Activated T-helper 1 cell treated with anti-CD3 and anti-CD28 coated beads, Interleukin-12 subunit alpha, Interleukin-12 subunit beta, Interleukin-2, Interleukin-4 antibody, amounts not matched to agents 30 ng/mL and 10 ng/mL and 1 ng/mL, durations not matched to agents 14 hours and 24 hours and 36 hours (primary cell): ENCODE measurements at regions of chr20 and their contacts with region 1.

Region 1: DNA sequence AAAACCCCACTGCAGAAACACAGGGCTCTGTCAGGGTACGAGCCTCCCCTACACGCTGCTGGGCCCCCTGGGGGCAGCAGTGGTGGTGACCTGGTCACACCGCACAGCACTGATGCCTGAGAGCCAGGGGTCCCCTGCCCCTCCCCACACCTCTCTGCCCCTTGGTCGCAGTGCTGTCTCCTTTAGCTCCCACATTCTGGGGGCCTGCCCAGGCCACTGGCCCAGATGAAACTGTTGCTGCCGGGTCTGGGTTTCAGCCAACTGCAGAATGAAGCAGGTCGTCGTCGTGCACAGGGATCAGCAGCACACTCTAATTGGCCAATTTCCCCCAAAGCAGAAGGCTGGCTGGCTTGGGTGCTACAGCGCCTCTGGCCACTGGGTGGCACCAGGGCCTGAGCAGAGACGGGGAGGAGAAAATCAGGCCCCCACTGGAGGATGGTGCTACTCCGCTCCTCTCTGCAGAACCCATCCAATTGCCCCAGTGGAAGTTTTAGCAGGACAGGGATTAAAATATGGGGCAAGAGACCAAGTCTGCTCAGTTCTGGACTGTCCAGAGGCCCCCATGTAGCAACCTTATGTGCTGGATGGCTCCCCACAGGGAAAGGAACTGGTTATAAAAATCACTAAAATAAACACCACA is 26.1 kb downstream of the DIDO1 start:
- DNase-seq: peak; percentile 60
- H3K4me3 Mint-ChIP-seq: peak overlapping the region; percentile 30
- H3K27ac Mint-ChIP-seq: peak overlapping the region; percentile 70
- H3K4me1 Mint-ChIP-seq: peaks cover 37% of the 10 kb centered on the region
- H3K27me3 Mint-ChIP-seq: no peaks in the 10 kb centered on the region

Region 2: DNA sequence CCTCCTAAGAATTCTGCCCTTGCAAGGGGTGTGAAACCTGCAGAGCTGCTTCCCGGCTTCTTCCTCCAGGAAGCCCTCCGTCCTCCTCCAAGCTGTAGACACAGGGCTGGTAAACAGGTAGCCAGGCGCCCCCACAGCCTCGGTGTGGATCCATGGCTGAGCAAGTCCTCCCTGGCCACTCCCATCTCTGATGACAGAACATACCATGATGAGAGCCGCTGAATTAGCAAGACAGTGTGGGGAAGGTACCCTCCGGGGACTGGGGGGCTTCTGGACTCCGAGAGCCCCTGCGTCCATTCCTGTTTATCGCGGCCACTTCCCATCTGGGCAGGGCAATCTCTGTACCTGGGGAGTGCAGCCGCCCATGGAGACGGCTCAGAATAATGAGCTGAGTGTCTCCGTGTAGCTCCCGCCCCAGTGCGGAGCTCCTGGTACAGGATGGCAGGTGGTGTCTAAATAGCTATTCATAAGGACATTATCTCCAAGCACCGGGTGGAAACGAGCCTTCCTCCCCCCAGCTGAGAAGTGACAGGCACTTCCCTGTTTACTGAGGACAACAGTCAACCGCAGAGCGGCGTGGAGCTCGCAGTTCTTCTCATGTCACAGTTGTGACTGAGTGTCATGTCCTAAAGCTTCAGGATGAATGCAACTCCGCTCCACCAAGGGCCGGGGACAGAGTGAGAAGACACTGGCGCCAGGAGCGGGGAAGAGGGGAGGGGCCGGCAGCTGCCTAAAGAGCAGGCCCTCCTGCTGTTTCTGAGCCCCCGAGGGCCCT is 214.2 kb before region 1 on chr20:
- intact Hi-C with region 1: no loop called
- DNase-seq: no peak
- H3K4me3 Mint-ChIP-seq: peak overlapping the region; percentile 39
- H3K27ac Mint-ChIP-seq: no peak overlapping the region
- H3K4me1 Mint-ChIP-seq: peaks cover 10% of the 10 kb centered on the region
- H3K27me3 Mint-ChIP-seq: peaks cover 14% of the 10 kb centered on the region

Region 3: DNA sequence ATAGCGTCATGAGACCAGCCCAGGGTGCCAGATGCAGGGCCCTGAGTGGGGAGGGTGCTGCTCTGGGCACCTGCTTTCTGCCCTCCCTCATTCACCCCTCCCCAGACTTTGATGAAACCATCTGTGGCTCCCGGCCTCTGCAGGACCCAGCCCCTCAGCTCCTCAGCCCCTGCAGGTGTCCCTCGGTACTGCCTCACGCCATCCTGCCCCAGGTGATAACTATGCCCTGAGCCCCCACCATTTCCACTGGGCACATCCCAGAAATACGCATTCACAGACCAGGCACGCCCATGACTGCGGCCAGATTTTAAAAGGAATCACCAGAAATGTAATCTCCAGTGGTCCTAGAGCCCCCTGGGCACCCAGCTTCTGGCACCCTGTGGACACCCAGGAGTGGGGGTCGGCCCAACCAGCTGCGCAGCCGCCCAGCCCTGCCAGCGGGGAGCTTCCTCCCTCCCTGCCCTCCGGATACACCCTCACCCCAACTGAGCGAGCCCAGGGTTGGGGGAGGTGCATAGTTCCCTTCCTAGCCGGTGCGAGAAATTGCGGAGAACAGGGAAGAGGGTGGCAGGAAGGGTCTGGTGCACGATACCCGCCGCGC is 192.2 kb before region 1 on chr20:
- intact Hi-C with region 1: no loop called
- DNase-seq: no peak
- H3K4me3 Mint-ChIP-seq: no peak overlapping the region
- H3K27ac Mint-ChIP-seq: no peak overlapping the region
- H3K4me1 Mint-ChIP-seq: no peaks in the 10 kb centered on the region
- H3K27me3 Mint-ChIP-seq: peaks cover 26% of the 10 kb centered on the region

Region 4: GRCh38 chr20:62921119-62921687 is 21.0 kb after region 1 on chr20:
- intact Hi-C with region 1: loop called (anchors 1 kb)
- DNase-seq: peak; percentile 54
- H3K4me3 Mint-ChIP-seq: peak overlapping the region; percentile 69
- H3K27ac Mint-ChIP-seq: peak overlapping the region; percentile 86
- H3K4me1 Mint-ChIP-seq: peaks cover 78% of the 10 kb centered on the region
- H3K27me3 Mint-ChIP-seq: no peaks in the 10 kb centered on the region

Region 5: GRCh38 chr20:62972270-62973032 is 72.3 kb after region 1 on chr20:
- intact Hi-C with region 1: loop called (anchors 1 kb)
- DNase-seq: peak; percentile 78
- H3K4me3 Mint-ChIP-seq: peak overlapping the region; percentile 43
- H3K27ac Mint-ChIP-seq: no peak overlapping the region
- H3K4me1 Mint-ChIP-seq: peaks cover 14% of the 10 kb centered on the region
- H3K27me3 Mint-ChIP-seq: peaks cover 33% of the 10 kb centered on the region